Psoas muscle (tissue), 8 donors: ENCODE measurements at regions of chr7 and their contacts with region 1.

Region 1: DNA sequence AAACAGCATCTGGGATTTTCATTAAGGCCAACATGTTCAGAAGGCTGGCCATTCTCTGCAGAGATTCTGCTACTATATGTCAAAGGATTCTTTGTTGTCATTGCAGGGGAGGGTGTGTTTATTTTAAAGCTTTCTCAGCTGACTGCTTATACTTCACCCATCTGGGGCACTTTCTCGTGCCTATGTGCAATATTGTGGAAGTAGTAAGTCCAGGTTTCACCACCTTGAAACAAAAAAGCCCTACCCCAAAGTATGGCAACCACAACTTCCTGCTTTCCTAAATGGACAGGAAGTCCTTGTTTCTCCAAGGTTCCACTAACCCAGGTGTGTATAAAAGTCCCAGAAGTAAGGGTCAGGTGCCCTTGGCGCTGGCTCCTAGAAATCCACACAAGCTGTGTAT is 58.7 kb upstream of the COL1A2 start:
- DNase-seq: no peak
- ATAC-seq: no peak
- H3K4me3 ChIP-seq: no peak overlapping the region
- H3K27ac ChIP-seq: no peak overlapping the region
- H3K4me1 ChIP-seq: no peaks in the 10 kb centered on the region
- H3K27me3 ChIP-seq: no peaks in the 10 kb centered on the region
- CTCF ChIP-seq: no peak

Region 2: DNA sequence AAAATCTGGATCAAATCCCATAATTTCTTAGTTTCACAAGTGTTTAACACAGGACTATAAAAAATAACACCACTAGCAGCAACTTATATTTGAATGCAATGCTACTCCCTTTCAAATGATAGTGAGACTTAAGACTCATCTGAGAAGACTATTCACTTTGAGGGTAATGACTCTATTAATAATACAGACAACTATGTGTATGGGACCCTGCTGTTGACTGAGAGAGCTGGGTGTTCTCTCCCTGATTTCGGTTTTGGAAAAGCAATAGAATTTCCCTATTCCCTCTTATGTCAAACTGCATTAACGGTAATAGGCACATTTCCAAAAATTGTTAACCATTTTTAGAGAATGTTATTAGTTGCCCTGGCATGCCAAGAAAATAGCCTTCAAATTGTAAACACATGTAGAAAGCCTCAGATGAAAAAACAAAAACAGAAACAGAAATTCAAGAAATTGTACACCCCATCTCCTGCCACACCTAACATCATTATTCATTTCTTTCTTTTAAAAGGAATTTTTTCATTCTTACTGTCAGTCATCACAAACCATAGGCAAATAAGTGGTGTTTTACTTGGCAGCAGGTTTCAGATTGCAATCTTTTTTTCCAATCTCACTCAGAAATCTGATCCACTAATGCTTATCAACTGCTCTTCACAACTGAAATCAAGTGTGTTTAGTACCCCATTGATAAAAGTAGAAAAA is 599.2 kb before region 1 on chr7:
- intact Hi-C with region 1: no loop called
- DNase-seq: no peak
- ATAC-seq: no peak
- H3K4me3 ChIP-seq: no peak overlapping the region
- H3K27ac ChIP-seq: no peak overlapping the region
- H3K4me1 ChIP-seq: no peaks in the 10 kb centered on the region
- H3K27me3 ChIP-seq: no peaks in the 10 kb centered on the region
- CTCF ChIP-seq: no peak

Region 3: GRCh38 chr7:94270775-94271174 is 65.2 kb before region 1 on chr7:
- intact Hi-C with region 1: loop called in 1 of 2 experiments (anchors 2 kb)
- DNase-seq: no peak
- ATAC-seq: no peak
- H3K4me3 ChIP-seq: no peak overlapping the region
- H3K27ac ChIP-seq: no peak overlapping the region
- H3K4me1 ChIP-seq: no peaks in the 10 kb centered on the region
- H3K27me3 ChIP-seq: no peaks in the 10 kb centered on the region
- CTCF ChIP-seq: no peak